OCI-LY7 (cell line): ENCODE measurements at regions of chr7 and their contacts with region 1.

Region 1: DNA sequence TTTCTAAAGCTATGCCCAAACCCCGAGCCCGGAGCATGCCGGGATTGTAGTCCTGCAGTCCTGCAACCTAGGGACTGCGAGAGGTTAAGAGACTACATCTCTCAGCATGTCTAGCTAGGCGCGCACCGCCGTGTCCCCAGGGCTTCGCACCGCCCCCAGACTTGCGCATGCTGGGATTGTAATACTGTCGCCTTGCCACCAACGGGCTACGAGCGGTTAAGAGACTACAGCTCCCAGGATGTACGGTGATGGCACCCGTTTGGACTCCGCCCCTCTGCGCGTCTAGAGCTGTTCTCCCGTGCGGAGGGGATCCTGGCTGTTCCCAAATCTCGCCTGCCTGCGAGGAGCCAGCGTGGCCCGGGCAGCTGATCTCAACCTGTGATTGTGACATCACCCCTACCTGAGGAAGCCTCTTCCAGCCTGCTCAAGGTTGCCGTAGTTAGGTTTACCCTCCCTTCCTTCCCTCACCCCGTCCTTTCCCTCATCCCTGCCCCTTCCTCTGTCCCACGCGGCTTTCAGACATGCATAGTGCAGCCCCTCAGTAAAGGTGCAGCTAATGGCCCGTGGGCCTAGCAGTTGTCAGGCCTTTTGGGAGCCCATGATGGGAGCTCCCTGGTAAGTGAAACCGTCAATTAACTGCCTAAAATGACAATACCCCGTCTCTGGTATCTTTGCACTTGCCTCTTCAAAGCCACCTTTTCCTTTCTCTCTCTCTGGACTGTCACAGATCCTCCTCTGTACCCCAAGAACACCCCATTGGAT is 6.3 kb upstream of the ZNF736 start:
- DNase-seq: peak; percentile 98
- H3K4me3 ChIP-seq: peak overlapping the region; percentile 91
- H3K27ac ChIP-seq: peak overlapping the region; percentile 91
- H3K4me1 ChIP-seq: peaks cover 38% of the 10 kb centered on the region
- CTCF ChIP-seq: no peak

Region 2: GRCh38 chr7:64366921-64367320 is 59.5 kb after region 1 on chr7:
- CTCF ChIA-PET with region 1: no interaction called
- POLR2A ChIA-PET with region 1: no interaction called
- intact Hi-C with region 1: loop called (anchors 10 kb)
- DNase-seq: no peak
- H3K4me3 ChIP-seq: no peak overlapping the region
- H3K27ac ChIP-seq: no peak overlapping the region
- H3K4me1 ChIP-seq: peaks cover 4% of the 10 kb centered on the region
- CTCF ChIP-seq: no peak

Region 3: GRCh38 chr7:64672414-64672813 is 365.0 kb after region 1 on chr7:
- CTCF ChIA-PET with region 1: no interaction called
- POLR2A ChIA-PET with region 1: no interaction called
- intact Hi-C with region 1: loop called (anchors 5 kb)
- DNase-seq: peak; percentile 80
- H3K4me3 ChIP-seq: peak overlapping the region; percentile 93
- H3K27ac ChIP-seq: peak overlapping the region; percentile 89
- H3K4me1 ChIP-seq: peaks cover 66% of the 10 kb centered on the region
- CTCF ChIP-seq: no peak